ENCODE measurements at regions of chr10 and their contacts with region 1.

Region 1: GRCh38 chr10:12042797-12043651 is at the start of gene UPF2:
- DNase-seq: peak; percentile 96
- ATAC-seq: peak; percentile 66
- H3K4me3 ChIP-seq: peak within 1 kb of the TSS; percentile 88
- H3K27ac ChIP-seq: peak within 1 kb of the TSS; percentile 97
- H3K4me1 ChIP-seq: peaks cover 15% of the 10 kb centered on the region
- H3K27me3 ChIP-seq: no peaks in the 10 kb centered on the region
- CTCF ChIP-seq: no peak
- EP300 ChIP-seq: no peak; a peak in 1 of 4 replicates
- POLR2A ChIP-seq: no peak; the same call in 1 of the 2 replicates
- RAD21 ChIP-seq: no peak
- polyA plus RNA-seq, gene UPF2: 21.2 to 22.2 TPM

Region 2: GRCh38 chr10:11993834-11994468 is 49.1 kb before region 1 on chr10:
- CTCF ChIA-PET with region 1: interaction called, 3 read pairs
- POLR2A ChIA-PET with region 1: interaction called, 20 read pairs
- RAD21 ChIA-PET with region 1: interaction called, 29 read pairs
- SMC1A ChIA-PET with region 1: interaction called, 25 read pairs
- in situ Hi-C with region 1: no loop called
- intact Hi-C with region 1: no loop called
- DNase-seq: peak; percentile 15
- ATAC-seq: peak; percentile 92
- H3K4me3 ChIP-seq: no peak overlapping the region
- H3K27ac ChIP-seq: peak overlapping the region; percentile 68
- H3K4me1 ChIP-seq: peaks cover 6% of the 10 kb centered on the region; the same call in 1 of the 2 replicates
- H3K27me3 ChIP-seq: no peaks in the 10 kb centered on the region
- CTCF ChIP-seq: no peak
- EP300 ChIP-seq: peak; percentile 54 to 71; a peak in 2 of 4 replicates
- POLR2A ChIP-seq: no peak
- RAD21 ChIP-seq: no peak

Region 3: GRCh38 chr10:12027539-12027938 is 15.5 kb before region 1 on chr10:
- CTCF ChIA-PET with region 1: interaction called, 3 read pairs
- POLR2A ChIA-PET with region 1: interaction called, 20 read pairs
- RAD21 ChIA-PET with region 1: interaction called, 14 read pairs
- SMC1A ChIA-PET with region 1: interaction called, 11 read pairs
- in situ Hi-C with region 1: no loop called
- intact Hi-C with region 1: no loop called
- DNase-seq: no peak
- ATAC-seq: peak; percentile 88
- H3K4me3 ChIP-seq: no peak overlapping the region
- H3K27ac ChIP-seq: no peak overlapping the region
- H3K4me1 ChIP-seq: peaks cover 17% of the 10 kb centered on the region
- H3K27me3 ChIP-seq: no peaks in the 10 kb centered on the region
- CTCF ChIP-seq: no peak
- EP300 ChIP-seq: no peak
- POLR2A ChIP-seq: no peak
- RAD21 ChIP-seq: no peak

Region 4: GRCh38 chr10:12068449-12069269 is 25.6 kb after region 1 on chr10 and contains the start of gene DHTKD1:
- CTCF ChIA-PET with region 1: interaction called, 5 read pairs
- POLR2A ChIA-PET with region 1: interaction called, 35 read pairs
- RAD21 ChIA-PET with region 1: interaction called, 40 read pairs
- SMC1A ChIA-PET with region 1: interaction called, 64 read pairs
- in situ Hi-C with region 1: no loop called
- intact Hi-C with region 1: loop called (anchors 1 kb)
- DNase-seq: peak; percentile 94
- ATAC-seq: peak; percentile 97
- H3K4me3 ChIP-seq: peak within 1 kb of the TSS; percentile 94
- H3K27ac ChIP-seq: peak within 1 kb of the TSS; percentile 84
- H3K4me1 ChIP-seq: peaks cover 13% of the 10 kb centered on the region
- H3K27me3 ChIP-seq: no peaks in the 10 kb centered on the region
- CTCF ChIP-seq: peak in 2 of 3 experiments; percentile 7 to 19; a peak in 1 of 6 replicates
- EP300 ChIP-seq: peak; percentile 58 to 63; a peak in 2 of 4 replicates
- POLR2A ChIP-seq: peak; percentile 87
- RAD21 ChIP-seq: no peak
- polyA plus RNA-seq, gene DHTKD1: 11.3 to 12.0 TPM

Region 5: GRCh38 chr10:12121673-12122072 is 78.6 kb after region 1 on chr10:
- CTCF ChIA-PET with region 1: interaction called, 10 read pairs
- POLR2A ChIA-PET with region 1: interaction called, 9 read pairs
- RAD21 ChIA-PET with region 1: interaction called, 32 read pairs
- SMC1A ChIA-PET with region 1: interaction called, 15 read pairs
- in situ Hi-C with region 1: loop called (anchors 5 kb)
- intact Hi-C with region 1: loop called (anchors 1 kb)
- DNase-seq: peak; percentile 62
- ATAC-seq: peak; percentile 72
- H3K4me3 ChIP-seq: peak overlapping the region; percentile 19; the same call in 1 of the 2 replicates
- H3K27ac ChIP-seq: peak overlapping the region; percentile 87
- H3K4me1 ChIP-seq: peaks cover 22% of the 10 kb centered on the region
- H3K27me3 ChIP-seq: no peaks in the 10 kb centered on the region
- CTCF ChIP-seq: no peak
- EP300 ChIP-seq: no peak; a peak in 2 of 4 replicates
- POLR2A ChIP-seq: no peak
- RAD21 ChIP-seq: no peak

Region 6: DNA sequence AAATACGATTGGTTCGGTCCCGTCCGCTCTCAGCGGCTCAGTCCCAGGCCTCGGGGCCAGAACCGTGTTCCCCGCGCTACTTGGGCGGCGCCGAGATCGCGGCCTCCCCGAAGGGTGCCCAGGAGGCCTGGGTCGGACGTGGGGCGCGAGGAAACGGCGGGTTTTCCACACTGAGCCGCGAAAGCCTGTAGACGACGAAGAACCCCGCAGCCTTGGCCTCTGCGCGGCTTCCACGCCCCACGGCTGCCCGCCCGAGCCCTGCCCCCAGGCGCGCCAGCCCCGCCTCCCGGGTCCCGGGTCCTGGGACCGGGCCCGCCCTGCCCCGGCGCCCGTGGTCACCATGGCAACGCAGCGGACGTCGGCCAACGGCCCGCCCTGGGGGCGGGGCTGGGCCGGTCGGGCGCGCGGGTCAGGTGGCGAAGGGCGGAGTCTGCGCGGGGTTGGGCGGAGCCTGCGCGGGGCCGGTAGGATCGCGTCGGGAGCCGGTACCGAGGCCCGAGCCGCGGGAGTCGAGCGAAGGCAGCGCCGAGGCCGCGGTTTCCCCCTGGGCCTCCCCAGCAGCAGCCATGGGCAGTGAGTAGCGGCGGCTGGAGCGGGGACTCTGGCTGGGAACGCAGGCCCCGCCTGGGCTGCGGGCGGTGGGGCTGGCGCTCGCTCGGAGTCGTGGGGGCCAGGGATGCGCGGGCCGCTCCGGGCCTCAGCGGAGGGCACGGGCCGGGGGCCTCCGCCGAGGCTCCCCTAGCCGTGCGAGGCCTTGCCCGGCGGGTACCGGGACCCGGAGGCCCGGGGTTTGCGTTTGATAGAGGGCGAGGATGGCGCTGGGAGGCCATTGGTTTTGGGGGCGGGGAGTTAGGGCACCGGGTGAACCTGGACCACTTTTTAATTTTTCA is 86.4 kb after region 1 on chr10 and contains the start of gene SEC61A2:
- CTCF ChIA-PET with region 1: interaction called, 10 read pairs
- POLR2A ChIA-PET with region 1: interaction called, 7 read pairs
- RAD21 ChIA-PET with region 1: interaction called, 11 read pairs
- SMC1A ChIA-PET with region 1: interaction called, 10 read pairs
- in situ Hi-C with region 1: loop called (anchors 5 kb)
- intact Hi-C with region 1: no loop called
- DNase-seq: peak; percentile 53
- ATAC-seq: peak; percentile 93
- H3K4me3 ChIP-seq: peak within 1 kb of the TSS; percentile 87
- H3K27ac ChIP-seq: peak within 1 kb of the TSS; percentile 85
- H3K4me1 ChIP-seq: no peaks in the 10 kb centered on the region
- H3K27me3 ChIP-seq: no peaks in the 10 kb centered on the region
- CTCF ChIP-seq: no peak
- EP300 ChIP-seq: no peak
- POLR2A ChIP-seq: peak; percentile 91
- RAD21 ChIP-seq: no peak
- polyA plus RNA-seq, gene SEC61A2: 3.0 to 3.7 TPM

Region 7: GRCh38 chr10:12181065-12181775 is 138.2 kb after region 1 on chr10:
- CTCF ChIA-PET with region 1: no interaction called
- POLR2A ChIA-PET with region 1: no interaction called
- RAD21 ChIA-PET with region 1: no interaction called
- SMC1A ChIA-PET with region 1: no interaction called
- in situ Hi-C with region 1: no loop called
- intact Hi-C with region 1: no loop called
- DNase-seq: peak; percentile 31
- ATAC-seq: no peak
- H3K4me3 ChIP-seq: no peak overlapping the region
- H3K27ac ChIP-seq: no peak overlapping the region
- H3K4me1 ChIP-seq: no peaks in the 10 kb centered on the region
- H3K27me3 ChIP-seq: no peaks in the 10 kb centered on the region
- CTCF ChIP-seq: no peak
- EP300 ChIP-seq: no peak
- POLR2A ChIP-seq: no peak
- RAD21 ChIP-seq: no peak

Region 8: DNA sequence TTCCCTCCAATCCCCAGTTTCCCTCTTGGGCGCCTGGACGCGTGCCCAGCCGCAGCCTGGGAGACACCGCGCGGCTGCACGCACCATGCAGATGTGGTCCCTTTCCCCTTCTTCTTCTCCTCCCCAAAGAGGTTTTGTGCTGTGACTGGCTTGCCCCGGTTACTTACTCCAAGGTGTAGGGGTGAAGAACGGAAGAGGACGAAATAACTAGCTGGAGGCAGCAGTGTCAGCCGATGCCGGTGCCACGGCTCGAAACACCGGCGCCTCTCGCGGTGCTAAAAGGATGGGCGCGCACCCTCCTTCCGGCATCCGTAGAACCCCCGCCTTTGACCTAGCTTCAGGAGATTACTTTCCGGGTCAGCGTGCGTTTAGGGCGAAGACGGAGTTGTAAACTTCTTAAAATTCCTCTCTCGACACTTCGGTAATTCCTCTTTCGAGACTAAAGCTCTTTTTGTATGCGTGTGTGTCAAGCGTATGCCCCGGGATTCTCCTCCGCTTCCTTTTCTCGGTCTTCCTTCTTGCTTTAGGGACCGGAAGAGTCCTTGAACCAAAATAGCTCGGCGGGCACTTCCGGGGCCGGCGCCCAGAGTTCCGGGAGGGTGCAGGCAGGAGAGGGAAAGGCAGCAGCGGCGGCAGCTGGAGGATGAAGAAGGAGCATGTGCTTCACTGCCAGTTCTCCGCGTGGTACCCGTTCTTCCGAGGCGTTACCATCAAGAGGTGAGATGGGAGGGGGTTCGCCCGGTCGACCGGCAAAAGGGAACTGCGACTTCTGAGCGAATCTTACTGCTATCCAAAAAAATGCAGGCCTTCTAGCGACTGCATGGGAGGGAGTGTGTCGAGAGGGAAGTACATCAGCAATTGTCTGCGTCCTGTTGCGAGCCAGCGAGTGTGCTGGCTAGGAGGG is 152.8 kb after region 1 on chr10 and contains the starts of genes CDC123 and NUDT5:
- CTCF ChIA-PET with region 1: interaction called, 3 read pairs
- POLR2A ChIA-PET with region 1: interaction called, 3 read pairs
- RAD21 ChIA-PET with region 1: interaction called, 6 read pairs
- SMC1A ChIA-PET with region 1: interaction called, 5 read pairs
- in situ Hi-C with region 1: no loop called
- intact Hi-C with region 1: loop called (anchors 5 kb)
- DNase-seq: peak; percentile 81
- ATAC-seq: peak; percentile 94
- H3K4me3 ChIP-seq: peak within 1 kb of the TSS; percentile 84
- H3K27ac ChIP-seq: peak within 1 kb of the TSS; percentile 98
- H3K4me1 ChIP-seq: peaks cover 4% of the 10 kb centered on the region; the same call in 1 of the 2 replicates
- H3K27me3 ChIP-seq: no peaks in the 10 kb centered on the region
- CTCF ChIP-seq: peak in 1 of 3 experiments; percentile 9; a peak in 1 of 6 replicates
- EP300 ChIP-seq: 0 out of 4 replicates have a peak, but pooled peaks of 1 of the 2 experiments have one; percentile 28
- POLR2A ChIP-seq: peak; percentile 95
- RAD21 ChIP-seq: no peak
- polyA plus RNA-seq, gene CDC123: 162 to 226 TPM
- polyA plus RNA-seq, gene NUDT5: 293 to 345 TPM